PC-9 (cell line): ENCODE measurements at regions of chr3 and their contacts with region 1.

Region 1: DNA sequence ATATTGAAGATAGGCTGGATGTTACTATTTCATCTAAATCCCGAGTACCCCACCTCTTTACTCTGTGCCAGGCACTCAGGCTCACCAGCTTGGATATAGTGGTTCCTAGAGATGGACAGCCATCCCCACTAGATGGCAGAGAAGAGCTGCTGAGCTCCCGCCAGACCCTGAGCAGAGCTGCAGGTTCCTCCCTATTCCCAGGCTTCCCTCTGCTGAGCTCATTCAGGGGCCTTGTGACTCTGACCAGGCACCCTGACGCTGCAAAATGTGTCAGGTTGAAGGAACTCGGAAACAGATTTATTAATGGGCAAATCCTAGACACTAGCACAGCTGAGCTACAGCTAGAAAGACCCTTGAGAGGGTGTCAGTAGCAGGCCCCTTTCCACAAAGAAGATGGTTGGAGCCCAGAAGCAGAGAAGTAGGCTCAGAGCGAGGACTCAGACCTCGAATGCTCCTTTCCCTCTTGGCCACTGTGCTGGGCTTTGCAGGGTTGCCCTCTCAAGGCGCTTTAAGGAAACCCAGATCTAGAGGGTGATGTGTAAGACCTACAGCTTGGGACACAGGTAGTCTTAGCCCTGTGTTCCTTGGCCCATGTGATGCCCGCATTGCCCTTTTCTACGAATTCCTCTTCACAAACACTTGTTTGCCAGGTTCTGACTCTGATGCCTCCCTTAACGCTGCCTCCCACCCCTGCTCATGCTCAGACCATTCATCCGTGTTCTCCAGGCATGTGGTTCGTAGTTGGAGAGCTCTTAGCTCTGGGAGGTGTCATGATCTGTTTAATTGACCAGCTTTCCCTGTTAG is 38.0 kb upstream of the RHO start:
- DNase-seq: peak; percentile 80 to 84
- H3K4me3 ChIP-seq: no peak overlapping the region
- H3K27ac ChIP-seq: peak overlapping the region; percentile 66
- H3K4me1 ChIP-seq: peaks cover 49% of the 10 kb centered on the region
- H3K27me3 ChIP-seq: no peaks in the 10 kb centered on the region
- CTCF ChIP-seq: peak; percentile 91

Region 2: DNA sequence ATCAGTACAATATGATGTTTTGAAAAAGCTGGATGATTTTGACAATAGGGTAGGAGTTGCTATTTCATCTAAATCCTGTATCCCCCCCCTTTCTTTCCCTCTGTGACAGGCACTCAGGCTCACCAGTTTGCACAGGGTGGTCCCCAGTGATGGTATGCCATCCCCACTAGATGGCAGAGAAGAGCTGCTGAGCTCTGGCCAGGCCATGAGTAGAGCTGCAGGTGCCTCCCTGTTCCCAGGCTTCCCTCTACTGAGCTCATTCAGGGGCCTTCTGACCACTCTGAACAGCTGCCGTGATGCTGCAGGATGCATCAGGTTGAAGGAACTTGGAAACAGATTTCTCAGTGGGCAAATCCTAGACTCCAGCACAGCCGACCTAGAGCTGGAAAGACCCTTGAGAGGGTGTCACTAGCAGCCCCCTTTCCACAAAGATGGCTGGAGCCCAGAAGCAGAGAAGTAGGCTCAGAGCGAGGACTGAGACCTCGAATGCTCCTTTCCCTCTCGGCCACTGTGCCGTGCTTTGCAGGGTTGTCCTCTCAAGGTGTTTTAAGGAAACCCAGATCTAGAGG is 107.1 kb before region 1 on chr3:
- CTCF ChIA-PET with region 1: interaction called, 7 read pairs
- POLR2A ChIA-PET with region 1: interaction called, 3 read pairs
- intact Hi-C with region 1: loop called (anchors 2 kb)
- DNase-seq: peak; percentile 49 to 66
- H3K4me3 ChIP-seq: no peak overlapping the region
- H3K27ac ChIP-seq: no peak overlapping the region
- H3K4me1 ChIP-seq: peaks cover 6% of the 10 kb centered on the region
- H3K27me3 ChIP-seq: no peaks in the 10 kb centered on the region
- CTCF ChIP-seq: peak; percentile 85

Region 3: GRCh38 chr3:129461022-129461421 is 29.4 kb before region 1 on chr3:
- CTCF ChIA-PET with region 1: no interaction called
- POLR2A ChIA-PET with region 1: no interaction called
- intact Hi-C with region 1: loop called (anchors 1 kb)
- DNase-seq: peak in 1 of 2 experiments; percentile 80
- H3K4me3 ChIP-seq: no peak overlapping the region
- H3K27ac ChIP-seq: peak overlapping the region; percentile 83
- H3K4me1 ChIP-seq: peaks cover 33% of the 10 kb centered on the region
- H3K27me3 ChIP-seq: no peaks in the 10 kb centered on the region
- CTCF ChIP-seq: no peak

Region 4: GRCh38 chr3:129608087-129608935 is 117.9 kb after region 1 on chr3:
- CTCF ChIA-PET with region 1: interaction called, 4 read pairs
- POLR2A ChIA-PET with region 1: interaction called, 5 read pairs
- intact Hi-C with region 1: loop called (anchors 1 kb)
- DNase-seq: no peak
- H3K4me3 ChIP-seq: no peak overlapping the region
- H3K27ac ChIP-seq: no peak overlapping the region
- H3K4me1 ChIP-seq: peaks cover 22% of the 10 kb centered on the region
- H3K27me3 ChIP-seq: peaks cover 9% of the 10 kb centered on the region; the same call in 1 of the 2 replicates
- CTCF ChIP-seq: no peak

Region 5: GRCh38 chr3:129934234-129935123 is 444.0 kb after region 1 on chr3:
- CTCF ChIA-PET with region 1: interaction called, 3 read pairs
- POLR2A ChIA-PET with region 1: no interaction called
- intact Hi-C with region 1: loop called (anchors 1 kb)
- DNase-seq: peak in 1 of 2 experiments; percentile 26
- H3K4me3 ChIP-seq: no peak overlapping the region
- H3K27ac ChIP-seq: no peak overlapping the region
- H3K4me1 ChIP-seq: no peaks in the 10 kb centered on the region
- H3K27me3 ChIP-seq: no peaks in the 10 kb centered on the region
- CTCF ChIP-seq: peak; percentile 98

Region 6: DNA sequence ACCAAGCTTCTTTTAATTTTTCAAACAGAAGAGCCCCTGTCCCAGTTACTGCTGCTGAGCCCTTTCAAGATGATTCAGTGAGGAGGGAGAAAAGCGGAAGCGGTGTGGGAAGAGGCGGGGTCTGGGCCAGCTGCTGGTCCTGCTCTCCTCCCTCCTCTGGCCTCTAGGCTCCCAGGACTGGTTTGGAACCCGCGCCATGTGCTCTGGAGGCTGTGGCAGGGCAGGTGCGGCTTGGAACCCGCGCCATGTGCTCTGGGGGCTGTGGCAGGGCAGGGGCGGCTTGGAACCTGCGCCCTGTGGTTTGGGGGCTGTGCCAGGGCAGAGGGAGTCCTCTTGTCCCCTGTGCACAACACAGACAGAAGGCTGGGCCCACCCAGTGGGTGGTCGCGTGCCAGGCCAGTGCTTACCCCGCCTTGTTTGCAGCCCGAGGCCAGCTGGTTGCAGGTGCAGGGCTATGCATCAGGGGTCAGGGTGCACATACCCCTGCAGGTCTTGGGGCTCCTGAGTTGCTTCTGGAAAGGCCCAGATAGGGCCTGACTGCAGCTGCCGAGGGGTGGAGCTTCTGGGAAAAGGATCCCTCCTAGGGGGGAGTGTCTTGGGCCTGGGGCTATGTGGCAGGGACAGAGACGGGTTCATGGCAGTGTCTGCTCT is 603.4 kb after region 1 on chr3:
- CTCF ChIA-PET with region 1: no interaction called
- POLR2A ChIA-PET with region 1: no interaction called
- intact Hi-C with region 1: loop called (anchors 5 kb)
- DNase-seq: peak; percentile 62 to 66
- H3K4me3 ChIP-seq: peak overlapping the region; percentile 46; the same call in 1 of the 2 replicates
- H3K27ac ChIP-seq: peak overlapping the region; percentile 77
- H3K4me1 ChIP-seq: peaks cover 26% of the 10 kb centered on the region
- H3K27me3 ChIP-seq: no peaks in the 10 kb centered on the region
- CTCF ChIP-seq: no peak